Activated naive CD4-positive, alpha-beta T cell treated with anti-CD3 and anti-CD28 coated beads for 36 hours (primary cell): ENCODE measurements at regions of chr10 and their contacts with region 1.

Region 1: DNA sequence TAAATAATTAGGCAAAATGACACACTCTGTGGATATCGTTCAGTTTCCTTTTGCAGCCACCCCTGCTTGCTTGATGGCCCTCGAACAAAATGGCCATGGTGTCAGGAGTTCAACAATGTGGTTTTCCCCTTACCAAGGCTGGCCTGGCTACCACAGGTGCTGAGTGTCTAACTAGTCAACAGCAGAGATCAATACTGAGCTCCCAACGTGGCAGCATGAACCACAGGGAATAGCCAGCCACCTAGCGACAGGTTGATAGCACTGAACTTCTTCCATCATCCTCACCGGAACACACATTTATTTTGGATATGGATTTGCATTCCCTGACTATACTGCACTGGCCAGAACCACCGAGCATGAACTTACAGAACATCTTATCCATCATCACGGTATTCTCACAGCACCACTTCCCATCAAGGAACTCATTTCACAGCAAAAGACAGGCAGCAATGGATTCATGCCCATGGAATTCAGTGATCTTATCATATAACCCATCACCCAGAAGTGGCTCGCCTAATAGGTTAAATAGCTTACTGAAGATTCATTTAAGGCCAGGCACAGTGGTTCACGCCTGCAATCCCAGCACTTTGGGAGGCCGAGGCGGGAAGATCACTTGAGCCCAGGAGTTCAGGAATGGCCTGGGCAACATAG is 6.3 kb downstream of the C10orf67 start:
- DNase-seq: no peak
- H3K4me3 Mint-ChIP-seq: no peak overlapping the region
- H3K27ac Mint-ChIP-seq: peak overlapping the region; percentile 32
- H3K4me1 Mint-ChIP-seq: peaks cover 82% of the 10 kb centered on the region
- H3K27me3 Mint-ChIP-seq: no peaks in the 10 kb centered on the region

Region 2: DNA sequence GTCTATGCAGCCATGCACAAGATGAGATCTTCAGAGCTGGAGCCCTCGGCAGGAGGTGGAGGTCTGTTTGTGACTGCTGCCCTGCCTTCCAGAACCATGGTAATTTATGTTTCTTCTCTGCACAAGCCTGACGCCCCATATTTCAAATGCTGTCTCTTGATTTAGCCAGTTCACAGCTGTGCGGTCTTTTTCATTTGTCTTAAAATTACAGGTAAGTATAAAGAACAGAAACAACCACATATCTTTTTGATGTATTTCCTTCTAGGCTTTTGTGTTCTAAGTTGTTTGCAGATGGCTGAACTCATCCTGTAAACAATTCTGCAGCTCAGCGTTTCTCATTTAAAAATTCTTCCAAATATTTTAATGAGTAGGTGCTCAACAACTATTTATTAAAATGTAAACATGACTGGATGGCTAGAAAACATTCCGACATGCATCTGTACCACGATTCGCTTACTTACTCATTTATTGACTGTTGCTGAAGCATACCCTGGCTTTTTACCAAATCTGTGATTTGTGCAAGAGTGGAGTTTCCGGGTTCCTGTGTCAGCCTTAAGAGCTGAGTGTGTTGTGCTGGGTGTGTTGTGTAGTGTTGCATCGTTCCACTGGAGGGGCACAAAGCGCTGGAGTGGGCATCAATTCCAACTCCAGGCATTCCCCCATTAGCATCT is 682.9 kb before region 1 on chr10:
- CTCF ChIA-PET with region 1: no interaction called
- intact Hi-C with region 1: loop called (anchors 10 kb)
- DNase-seq: peak; percentile 69
- H3K4me3 Mint-ChIP-seq: peak overlapping the region; percentile 46
- H3K27ac Mint-ChIP-seq: peak overlapping the region; percentile 89
- H3K4me1 Mint-ChIP-seq: peaks cover 99% of the 10 kb centered on the region
- H3K27me3 Mint-ChIP-seq: no peaks in the 10 kb centered on the region

Region 3: DNA sequence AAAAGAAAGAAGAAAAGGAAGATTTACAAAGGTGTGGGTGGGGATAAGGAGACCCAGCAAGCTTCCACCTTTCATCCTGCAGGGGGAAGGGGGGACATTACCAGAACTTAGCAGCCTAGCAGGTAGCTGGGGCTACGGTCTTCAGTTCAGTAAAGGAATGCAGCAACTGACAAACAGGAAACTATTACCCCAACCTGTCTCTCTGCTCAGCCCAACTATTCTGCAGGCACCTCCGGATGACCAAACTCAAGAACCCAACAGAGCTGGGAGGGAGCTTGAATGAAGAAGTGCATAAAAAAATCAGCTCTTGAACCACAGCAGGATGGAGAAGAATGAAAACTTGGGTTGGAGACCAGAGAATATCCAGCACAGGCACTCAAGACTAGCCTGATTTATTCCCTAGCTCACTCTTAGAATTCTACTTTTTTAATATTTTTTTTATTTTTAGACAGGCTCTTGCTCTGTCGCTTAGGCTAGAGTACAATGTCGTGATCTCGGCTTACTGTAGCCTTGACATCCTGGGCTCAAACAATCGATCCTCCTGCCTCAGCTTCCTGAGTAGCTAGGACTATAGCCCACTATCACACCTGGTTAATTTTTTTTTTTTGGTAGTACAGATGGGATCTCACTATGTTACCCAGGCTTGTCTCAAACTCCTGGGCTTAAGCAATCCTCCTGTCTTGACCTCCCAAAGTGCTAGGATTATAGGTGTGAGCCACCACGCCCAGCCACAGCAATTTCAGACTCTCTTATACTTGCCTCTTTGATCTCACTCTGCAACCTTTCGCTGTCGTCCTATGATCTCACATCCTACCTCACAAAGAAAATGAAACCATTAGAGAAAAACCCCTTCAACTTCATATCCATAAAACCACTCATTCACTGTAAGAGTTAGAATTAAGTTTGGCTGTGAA is 24.8 kb after region 1 on chr10:
- CTCF ChIA-PET with region 1: interaction called, 4 read pairs
- intact Hi-C with region 1: loop called (anchors 1 kb)
- DNase-seq: peak; percentile 72
- H3K4me3 Mint-ChIP-seq: peak overlapping the region; percentile 68
- H3K27ac Mint-ChIP-seq: peak overlapping the region; percentile 95
- H3K4me1 Mint-ChIP-seq: peaks cover 58% of the 10 kb centered on the region
- H3K27me3 Mint-ChIP-seq: no peaks in the 10 kb centered on the region

Region 4: GRCh38 chr10:23448802-23449570 is 110.7 kb after region 1 on chr10:
- CTCF ChIA-PET with region 1: no interaction called
- intact Hi-C with region 1: loop called (anchors 1 kb)
- DNase-seq: no peak
- H3K4me3 Mint-ChIP-seq: peak overlapping the region; percentile 35
- H3K27ac Mint-ChIP-seq: peak overlapping the region; percentile 92
- H3K4me1 Mint-ChIP-seq: peaks cover 42% of the 10 kb centered on the region
- H3K27me3 Mint-ChIP-seq: no peaks in the 10 kb centered on the region

Region 5: GRCh38 chr10:23478570-23478969 is 140.3 kb after region 1 on chr10:
- CTCF ChIA-PET with region 1: no interaction called
- intact Hi-C with region 1: no loop called
- DNase-seq: no peak
- H3K4me3 Mint-ChIP-seq: no peak overlapping the region
- H3K27ac Mint-ChIP-seq: no peak overlapping the region
- H3K4me1 Mint-ChIP-seq: peaks cover 4% of the 10 kb centered on the region
- H3K27me3 Mint-ChIP-seq: no peaks in the 10 kb centered on the region

Region 6: DNA sequence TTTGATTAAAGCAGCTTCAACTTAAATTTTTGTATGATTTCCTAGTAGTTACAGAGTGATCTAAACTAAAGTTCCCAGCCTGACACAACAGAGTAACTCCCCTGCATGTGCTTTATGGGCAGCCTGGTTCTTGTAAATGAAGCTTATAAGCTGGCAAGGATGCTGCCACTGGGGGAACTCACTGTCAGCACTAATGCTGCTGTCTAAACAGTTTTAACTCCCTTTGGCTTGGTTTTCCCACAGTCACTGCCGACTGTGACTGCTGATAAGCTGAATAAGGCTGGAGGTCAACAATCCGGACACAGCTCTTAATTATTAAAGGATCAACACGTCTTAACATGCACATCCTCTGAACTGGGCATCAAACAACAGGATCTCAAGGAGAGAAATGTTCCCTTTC is 230.7 kb after region 1 on chr10:
- CTCF ChIA-PET with region 1: no interaction called
- intact Hi-C with region 1: no loop called
- DNase-seq: no peak
- H3K4me3 Mint-ChIP-seq: no peak overlapping the region
- H3K27ac Mint-ChIP-seq: no peak overlapping the region
- H3K4me1 Mint-ChIP-seq: no peaks in the 10 kb centered on the region
- H3K27me3 Mint-ChIP-seq: no peaks in the 10 kb centered on the region

Region 7: GRCh38 chr10:24724381-24725228 is 1386.3 kb after region 1 on chr10:
- CTCF ChIA-PET with region 1: no interaction called
- intact Hi-C with region 1: loop called (anchors 5 kb)
- DNase-seq: peak; percentile 97
- H3K4me3 Mint-ChIP-seq: peak overlapping the region; percentile 89
- H3K27ac Mint-ChIP-seq: peak overlapping the region; percentile 89
- H3K4me1 Mint-ChIP-seq: peaks cover 14% of the 10 kb centered on the region
- H3K27me3 Mint-ChIP-seq: no peaks in the 10 kb centered on the region